ENCODE measurements at regions of chr5 and their contacts with region 1.

Region 1: DNA sequence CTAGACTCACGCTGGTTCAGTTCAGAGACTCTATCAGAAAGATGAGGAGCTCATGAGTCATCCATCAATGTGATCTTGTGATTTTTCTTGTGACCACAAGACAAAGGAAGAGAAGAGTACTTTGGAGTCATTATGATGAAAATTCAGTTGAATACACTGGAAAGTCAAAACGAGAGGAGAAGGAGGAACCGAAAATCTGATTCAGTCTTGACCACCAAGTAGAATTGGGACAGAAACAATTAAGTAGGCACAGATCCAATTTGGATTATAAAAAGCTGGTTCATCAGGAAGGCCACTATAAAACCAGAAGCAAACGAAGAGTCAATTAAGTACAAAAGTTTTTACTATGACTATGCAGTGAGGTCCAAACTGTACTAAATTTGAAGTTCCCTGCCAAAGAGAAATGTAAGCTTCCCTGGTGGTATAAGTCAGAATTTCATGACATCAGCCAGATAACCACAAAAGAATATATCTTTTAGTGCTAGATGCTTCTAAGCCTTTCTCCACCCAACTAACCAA is 90.9 kb downstream of the THBS4 start:
- DNase-seq: peak; percentile 93
- ATAC-seq: peak; percentile 81
- H3K4me3 ChIP-seq: peak overlapping the region; percentile 32; the same call in 1 of the 2 replicates
- H3K27ac ChIP-seq: peak overlapping the region; percentile 74
- H3K4me1 ChIP-seq: peaks cover 28% of the 10 kb centered on the region
- H3K27me3 ChIP-seq: no peaks in the 10 kb centered on the region
- CTCF ChIP-seq: no peak; a peak in 1 of 6 replicates
- EP300 ChIP-seq: peak; percentile 97 to 99; a peak in 3 of 4 replicates
- POLR2A ChIP-seq: no peak
- RAD21 ChIP-seq: no peak

Region 2: GRCh38 chr5:79357398-79357797 is 768.6 kb before region 1 on chr5:
- CTCF ChIA-PET with region 1: no interaction called
- POLR2A ChIA-PET with region 1: no interaction called
- RAD21 ChIA-PET with region 1: no interaction called
- SMC1A ChIA-PET with region 1: no interaction called
- in situ Hi-C with region 1: no loop called
- intact Hi-C with region 1: no loop called
- DNase-seq: no peak
- ATAC-seq: no peak
- H3K4me3 ChIP-seq: no peak overlapping the region
- H3K27ac ChIP-seq: no peak overlapping the region
- H3K4me1 ChIP-seq: no peaks in the 10 kb centered on the region
- H3K27me3 ChIP-seq: no peaks in the 10 kb centered on the region
- CTCF ChIP-seq: no peak
- EP300 ChIP-seq: no peak
- POLR2A ChIP-seq: no peak
- RAD21 ChIP-seq: no peak

Region 3: GRCh38 chr5:80109646-80110478 is 16.2 kb before region 1 on chr5:
- CTCF ChIA-PET with region 1: interaction called, 14 read pairs
- POLR2A ChIA-PET with region 1: interaction called, 7 read pairs
- RAD21 ChIA-PET with region 1: interaction called, 20 read pairs
- SMC1A ChIA-PET with region 1: interaction called, 15 read pairs
- in situ Hi-C with region 1: no loop called
- intact Hi-C with region 1: no loop called
- DNase-seq: peak; percentile 52
- ATAC-seq: peak; percentile 86
- H3K4me3 ChIP-seq: no peak overlapping the region
- H3K27ac ChIP-seq: no peak overlapping the region
- H3K4me1 ChIP-seq: peaks cover 11% of the 10 kb centered on the region
- H3K27me3 ChIP-seq: no peaks in the 10 kb centered on the region
- CTCF ChIP-seq: no peak
- EP300 ChIP-seq: no peak
- POLR2A ChIP-seq: no peak
- RAD21 ChIP-seq: no peak

Region 4: DNA sequence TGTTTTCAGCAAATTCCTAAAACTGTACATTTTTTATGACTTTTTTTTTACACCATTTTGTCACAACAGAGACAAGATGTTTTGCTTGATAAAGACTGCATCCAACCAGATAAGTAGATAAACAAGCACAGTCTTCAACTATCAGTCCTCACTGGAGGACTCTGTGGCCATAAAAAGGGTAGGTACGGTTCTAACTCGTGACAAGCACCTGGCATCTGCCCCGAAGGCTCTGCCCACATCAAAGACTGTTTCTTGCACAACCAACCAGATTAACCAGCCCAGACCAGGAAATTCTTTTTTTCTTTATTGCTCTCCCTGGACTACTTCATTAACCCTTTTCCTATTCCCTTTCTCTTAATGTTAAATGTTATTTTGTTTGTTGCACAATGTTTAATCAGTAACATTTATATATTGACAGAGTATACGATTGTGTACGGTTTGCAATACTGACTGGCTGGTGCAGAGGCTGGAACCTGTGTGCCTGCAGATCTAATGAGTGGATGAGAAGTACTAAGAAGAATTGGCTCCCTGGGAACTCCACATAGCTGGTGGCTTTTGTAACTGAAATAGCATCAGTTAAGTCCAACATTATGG is 55.7 kb after region 1 on chr5:
- CTCF ChIA-PET with region 1: no interaction called
- POLR2A ChIA-PET with region 1: interaction called, 5 read pairs
- RAD21 ChIA-PET with region 1: no interaction called
- SMC1A ChIA-PET with region 1: interaction called, 10 read pairs
- in situ Hi-C with region 1: no loop called
- intact Hi-C with region 1: no loop called
- DNase-seq: no peak
- ATAC-seq: peak; percentile 78
- H3K4me3 ChIP-seq: no peak overlapping the region
- H3K27ac ChIP-seq: no peak overlapping the region
- H3K4me1 ChIP-seq: peaks cover 8% of the 10 kb centered on the region
- H3K27me3 ChIP-seq: no peaks in the 10 kb centered on the region
- CTCF ChIP-seq: no peak
- EP300 ChIP-seq: no peak
- POLR2A ChIP-seq: no peak
- RAD21 ChIP-seq: no peak

Region 5: GRCh38 chr5:80238778-80239679 is 113.0 kb after region 1 on chr5:
- CTCF ChIA-PET with region 1: no interaction called
- POLR2A ChIA-PET with region 1: interaction called, 5 read pairs
- RAD21 ChIA-PET with region 1: interaction called, 6 read pairs
- SMC1A ChIA-PET with region 1: interaction called, 15 read pairs
- in situ Hi-C with region 1: no loop called
- intact Hi-C with region 1: no loop called
- DNase-seq: no peak
- ATAC-seq: peak; percentile 21; the same call in 1 of the 3 replicates
- H3K4me3 ChIP-seq: no peak overlapping the region
- H3K27ac ChIP-seq: no peak overlapping the region
- H3K4me1 ChIP-seq: no peaks in the 10 kb centered on the region
- H3K27me3 ChIP-seq: no peaks in the 10 kb centered on the region
- CTCF ChIP-seq: no peak
- EP300 ChIP-seq: no peak
- POLR2A ChIP-seq: no peak
- RAD21 ChIP-seq: no peak

Region 6: GRCh38 chr5:80255732-80256479 is 129.9 kb after region 1 on chr5 and contains the start of gene SERINC5:
- CTCF ChIA-PET with region 1: interaction called, 7 read pairs
- POLR2A ChIA-PET with region 1: interaction called, 17 read pairs
- RAD21 ChIA-PET with region 1: interaction called, 34 read pairs
- SMC1A ChIA-PET with region 1: interaction called, 26 read pairs
- in situ Hi-C with region 1: no loop called
- intact Hi-C with region 1: loop called (anchors 1 kb)
- DNase-seq: no peak
- ATAC-seq: peak; percentile 82
- H3K4me3 ChIP-seq: peak within 1 kb of the TSS; percentile 98
- H3K27ac ChIP-seq: peak within 1 kb of the TSS; percentile 94
- H3K4me1 ChIP-seq: peaks cover 8% of the 10 kb centered on the region
- H3K27me3 ChIP-seq: no peaks in the 10 kb centered on the region
- CTCF ChIP-seq: no peak
- EP300 ChIP-seq: 0 out of 4 replicates have a peak, but pooled peaks of 1 of the 2 experiments have one; percentile 20
- POLR2A ChIP-seq: peak; percentile 97
- RAD21 ChIP-seq: no peak
- polyA plus RNA-seq, gene SERINC5: 0.66 to 1.9 TPM